Heart right ventricle (tissue), 16 donors: ENCODE measurements at regions of chr17 and their contacts with region 1.

Region 1: GRCh38 chr17:70636517-70637133 is 467.3 kb downstream of the KCNJ2 start:
- DNase-seq: peak in 1 of 2 donors; percentile 12
- ATAC-seq: no peak
- H3K4me3 ChIP-seq: no peak overlapping the region
- H3K27ac ChIP-seq: no peak overlapping the region
- H3K4me1 ChIP-seq: no peaks in the 10 kb centered on the region
- H3K27me3 ChIP-seq: peaks cover 0 to 9% (median 0%) of the 10 kb centered on the region in 7 donors
- CTCF ChIP-seq: peak; percentile 65 to 85 (median 79)

Region 2: DNA sequence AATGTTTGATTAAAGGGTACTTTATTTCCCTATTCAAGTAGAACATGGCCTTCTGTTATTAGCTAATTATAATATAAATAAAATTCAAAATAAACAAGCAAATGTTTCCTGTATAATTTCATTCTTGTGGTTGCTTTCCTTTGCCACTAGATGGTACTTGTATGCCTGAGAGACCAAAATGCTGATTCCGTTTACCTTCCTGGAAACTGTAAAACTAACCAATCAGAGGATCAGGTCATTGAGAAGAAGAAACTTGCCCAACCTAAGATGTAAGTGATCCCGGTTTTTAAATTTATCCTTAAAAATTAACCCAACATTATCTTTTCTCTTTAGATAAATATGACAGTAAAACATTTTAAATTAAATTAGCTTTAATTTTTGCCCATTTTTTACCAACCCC is 1301.6 kb before region 1 on chr17:
- intact Hi-C with region 1: loop called in 2 of 10 experiments (anchors 10 kb)
- DNase-seq: no peak
- ATAC-seq: peak in 1 of 8 donors; percentile 57
- H3K4me3 ChIP-seq: no peak overlapping the region
- H3K27ac ChIP-seq: no peak overlapping the region
- H3K4me1 ChIP-seq: no peaks in the 10 kb centered on the region
- H3K27me3 ChIP-seq: peaks cover 0 to 6% (median 0%) of the 10 kb centered on the region in 7 donors
- CTCF ChIP-seq: peak; percentile 13 to 62 (median 53)

Region 3: GRCh38 chr17:70597774-70598173 is 38.9 kb before region 1 on chr17:
- intact Hi-C with region 1: no loop called
- DNase-seq: no peak
- ATAC-seq: no peak
- H3K4me3 ChIP-seq: no peak overlapping the region
- H3K27ac ChIP-seq: no peak overlapping the region
- H3K4me1 ChIP-seq: no peaks in the 10 kb centered on the region
- H3K27me3 ChIP-seq: no peaks in the 10 kb centered on the region
- CTCF ChIP-seq: no peak

Region 4: GRCh38 chr17:70699408-70699807 is 62.8 kb after region 1 on chr17:
- intact Hi-C with region 1: no loop called
- DNase-seq: no peak
- ATAC-seq: no peak
- H3K4me3 ChIP-seq: no peak overlapping the region
- H3K27ac ChIP-seq: no peak overlapping the region
- H3K4me1 ChIP-seq: no peaks in the 10 kb centered on the region
- H3K27me3 ChIP-seq: no peaks in the 10 kb centered on the region
- CTCF ChIP-seq: no peak

Region 5: GRCh38 chr17:71099003-71099714 is 462.5 kb after region 1 on chr17:
- intact Hi-C with region 1: loop called in 1 of 10 experiments (anchors 10 kb)
- DNase-seq: no peak
- ATAC-seq: no peak
- H3K4me3 ChIP-seq: no peak overlapping the region
- H3K27ac ChIP-seq: no peak overlapping the region
- H3K4me1 ChIP-seq: no peaks in the 10 kb centered on the region
- H3K27me3 ChIP-seq: no peaks in the 10 kb centered on the region
- CTCF ChIP-seq: no peak